IMR-90 (cell line): ENCODE measurements at regions of chr16 and their contacts with region 1.

Region 1: DNA sequence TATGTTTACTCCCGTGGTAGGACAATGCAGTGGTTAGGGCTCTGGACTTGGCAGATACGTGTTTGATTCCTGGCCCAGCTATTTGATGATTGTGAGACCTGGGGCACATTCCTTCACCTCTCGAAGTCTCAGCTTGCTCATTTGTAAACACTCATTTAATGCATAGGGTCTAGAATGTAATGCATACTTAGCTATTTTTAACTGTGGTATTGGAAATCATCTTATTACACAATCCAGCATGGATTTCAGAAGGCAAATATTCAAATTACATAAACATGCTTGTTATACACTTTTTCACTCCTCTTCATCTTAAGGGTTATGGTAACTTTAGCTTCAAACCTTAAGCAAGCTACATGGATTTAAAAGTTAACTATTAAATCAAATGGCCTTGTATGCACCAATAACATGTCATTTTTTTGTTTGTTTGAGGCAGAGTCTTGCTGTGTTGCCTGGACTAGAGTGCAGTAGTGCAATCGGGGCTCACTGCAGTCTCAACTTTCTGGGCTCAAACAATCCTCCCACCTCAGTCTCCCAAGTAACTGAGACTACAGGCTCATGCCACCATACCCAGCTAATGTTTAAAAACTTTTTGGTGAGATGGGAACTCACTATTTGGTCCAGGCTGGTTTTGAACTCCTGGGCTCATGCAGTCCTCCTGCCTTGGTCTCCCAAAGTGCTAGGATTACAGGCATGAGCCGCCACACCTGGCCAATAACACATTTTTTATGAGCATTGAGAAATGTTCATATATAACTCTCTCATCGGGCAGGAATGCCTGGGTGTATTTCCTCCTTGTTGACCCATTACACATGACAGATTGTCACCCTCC is 52.5 kb downstream of the VAT1L start:
- DNase-seq: peak; percentile 85
- ATAC-seq: peak; percentile 75
- H3K4me3 ChIP-seq: no peak overlapping the region
- H3K27ac ChIP-seq: peak overlapping the region; percentile 57; the same call in 1 of the 2 replicates
- H3K4me1 ChIP-seq: peaks cover 20% of the 10 kb centered on the region
- H3K27me3 ChIP-seq: no peaks in the 10 kb centered on the region
- CTCF ChIP-seq: no peak
- POLR2A ChIP-seq: no peak
- RAD21 ChIP-seq: no peak

Region 2: DNA sequence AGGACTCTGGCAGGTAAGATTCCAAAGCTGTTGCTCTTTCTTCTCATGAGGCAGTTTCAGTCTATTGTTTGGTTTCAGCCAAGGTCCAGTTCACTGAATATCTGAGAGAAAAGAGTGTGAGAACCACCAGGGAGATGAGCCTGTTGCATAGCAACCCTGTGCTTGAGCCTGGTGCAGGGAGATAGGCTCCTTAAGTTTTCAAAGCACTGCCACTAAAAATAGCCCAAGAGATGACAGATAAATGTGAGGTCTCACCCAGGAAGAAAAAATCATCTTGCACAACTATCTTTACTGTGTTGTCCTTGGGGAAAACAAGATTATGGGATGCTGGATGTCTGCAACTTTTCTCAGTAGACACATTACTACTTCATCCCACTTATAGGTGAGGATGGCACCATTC is 144.7 kb before region 1 on chr16:
- CTCF ChIA-PET with region 1: no interaction called
- POLR2A ChIA-PET with region 1: no interaction called
- dilution Hi-C with region 1: no loop called
- in situ Hi-C with region 1: no loop called
- intact Hi-C with region 1: no loop called
- DNase-seq: no peak
- ATAC-seq: no peak
- H3K4me3 ChIP-seq: no peak overlapping the region
- H3K27ac ChIP-seq: no peak overlapping the region
- H3K4me1 ChIP-seq: no peaks in the 10 kb centered on the region
- H3K27me3 ChIP-seq: peaks cover 22% of the 10 kb centered on the region
- CTCF ChIP-seq: no peak
- POLR2A ChIP-seq: no peak
- RAD21 ChIP-seq: no peak

Region 3: DNA sequence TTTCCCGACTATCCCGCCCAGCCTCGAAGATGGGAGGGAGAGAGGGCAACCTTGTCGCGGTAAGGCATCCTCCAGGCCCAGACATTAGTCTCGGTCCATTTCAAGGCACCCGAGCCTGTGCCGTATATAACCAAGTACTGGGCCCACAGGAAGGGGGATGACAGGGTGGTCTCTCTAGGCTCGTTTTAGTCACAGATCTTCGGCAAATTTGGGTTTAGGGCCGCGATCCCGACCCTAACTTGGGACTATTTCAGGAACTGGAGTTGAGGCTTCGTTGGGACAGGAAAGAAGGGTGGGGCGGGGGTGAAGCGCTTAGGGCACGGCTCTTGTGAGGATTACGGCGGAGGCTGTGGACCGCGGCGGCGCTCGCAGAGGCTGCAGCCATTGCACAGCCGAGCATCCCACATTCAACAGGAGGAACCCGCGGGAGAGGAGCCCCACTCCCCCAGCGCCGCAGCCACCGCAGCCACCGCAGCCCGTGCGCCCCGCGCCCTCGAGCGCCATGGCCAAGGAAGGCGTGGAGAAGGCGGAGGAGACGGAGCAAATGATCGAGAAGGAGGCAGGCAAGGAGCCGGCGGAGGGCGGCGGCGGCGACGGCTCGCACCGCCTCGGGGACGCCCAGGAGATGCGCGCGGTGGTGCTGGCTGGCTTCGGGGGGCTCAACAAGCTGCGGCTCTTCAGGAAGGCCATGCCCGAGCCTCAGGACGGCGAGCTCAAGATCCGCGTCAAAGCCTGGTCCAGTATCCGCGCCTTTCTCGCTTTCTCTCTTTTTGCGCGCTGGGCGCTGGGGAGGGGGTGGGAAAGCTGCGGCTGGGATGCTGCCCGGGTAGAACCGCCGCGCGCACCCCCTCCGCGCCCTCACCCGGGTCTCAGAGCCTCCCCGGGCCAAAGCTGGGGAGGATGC is 52.5 kb before region 1 on chr16 and contains the start of gene VAT1L:
- CTCF ChIA-PET with region 1: no interaction called
- POLR2A ChIA-PET with region 1: no interaction called
- dilution Hi-C with region 1: no loop called
- in situ Hi-C with region 1: no loop called
- intact Hi-C with region 1: loop called (anchors 2 kb)
- DNase-seq: peak; percentile 63
- ATAC-seq: peak; percentile 93
- H3K4me3 ChIP-seq: peak within 1 kb of the TSS; percentile 93
- H3K27ac ChIP-seq: peak within 1 kb of the TSS; percentile 25; the same call in 1 of the 2 replicates
- H3K4me1 ChIP-seq: peaks cover 9% of the 10 kb centered on the region
- H3K27me3 ChIP-seq: peaks cover 4% of the 10 kb centered on the region; the same call in 1 of the 2 replicates
- CTCF ChIP-seq: no peak
- POLR2A ChIP-seq: no peak
- RAD21 ChIP-seq: no peak
- total RNA-seq, gene VAT1L: 18.1 and 18.5 TPM in 2 replicates

Region 4: GRCh38 chr16:77805398-77805797 is 35.5 kb before region 1 on chr16:
- CTCF ChIA-PET with region 1: no interaction called
- POLR2A ChIA-PET with region 1: no interaction called
- dilution Hi-C with region 1: no loop called
- in situ Hi-C with region 1: no loop called
- intact Hi-C with region 1: loop called (anchors 1 kb)
- DNase-seq: no peak
- ATAC-seq: no peak
- H3K4me3 ChIP-seq: no peak overlapping the region
- H3K27ac ChIP-seq: no peak overlapping the region
- H3K4me1 ChIP-seq: no peaks in the 10 kb centered on the region
- H3K27me3 ChIP-seq: no peaks in the 10 kb centered on the region
- CTCF ChIP-seq: no peak
- POLR2A ChIP-seq: no peak
- RAD21 ChIP-seq: no peak